Caco-2 (cell line): ENCODE measurements at regions of chr3 and their contacts with region 1.

Region 1: GRCh38 chr3:57755668-57756527 is at the start of gene SLMAP:
- DNase-seq: peak; percentile 96 to 98
- H3K4me3 ChIP-seq: peak within 1 kb of the TSS; percentile 99
- H3K4me3 Mint-ChIP-seq: peak within 1 kb of the TSS; percentile 95
- H3K27ac Mint-ChIP-seq: peak within 1 kb of the TSS; percentile 95
- H3K4me1 ChIP-seq: peaks cover 20% of the 10 kb centered on the region
- H3K4me1 Mint-ChIP-seq: peaks cover 12% of the 10 kb centered on the region
- H3K27me3 ChIP-seq: no peaks in the 10 kb centered on the region
- H3K27me3 Mint-ChIP-seq: no peaks in the 10 kb centered on the region
- CTCF ChIP-seq: no peak
- total RNA-seq, gene SLMAP: 126 and 136 TPM in 2 replicates

Region 2: DNA sequence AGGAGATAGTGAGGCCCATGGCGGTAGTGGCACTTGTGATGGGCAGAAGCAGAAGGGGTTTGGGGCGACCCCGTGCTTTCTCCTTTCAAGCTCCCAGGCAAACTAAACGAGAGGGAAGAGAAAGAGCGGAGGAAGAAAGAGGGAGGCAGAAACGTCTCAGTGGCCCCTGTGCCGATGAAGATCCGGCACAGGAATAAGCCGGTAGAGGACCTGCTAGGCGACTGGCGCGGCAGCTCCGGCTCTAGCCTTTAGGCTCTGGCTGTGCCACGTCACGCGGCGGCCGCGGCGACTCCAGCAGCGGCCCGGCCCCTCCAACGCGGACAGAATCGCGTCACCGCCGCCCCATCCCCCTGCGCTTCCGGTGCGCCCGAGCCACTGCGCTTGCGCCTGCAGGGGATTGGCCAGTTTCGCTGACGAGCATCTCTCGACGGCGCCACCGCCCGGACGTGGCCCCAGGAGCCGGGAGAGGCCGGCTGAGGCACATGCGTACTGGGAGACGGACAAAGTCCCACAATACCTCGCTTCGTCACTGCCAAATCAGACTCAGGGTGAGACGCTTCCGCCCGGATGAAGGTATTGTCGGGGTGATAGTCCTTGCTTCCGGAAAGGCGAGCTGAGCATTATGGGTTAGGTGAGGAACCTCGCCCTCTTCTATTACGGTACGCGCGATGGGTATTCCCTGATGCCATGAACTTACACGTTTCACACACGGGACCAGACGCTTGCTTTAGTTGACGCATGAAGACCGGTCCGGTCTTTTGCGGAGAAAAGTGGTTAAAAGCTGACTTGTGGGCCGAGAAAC is 158.6 kb before region 1 on chr3 and contains the start of gene ARF4:
- CTCF ChIA-PET with region 1: no interaction called
- POLR2A ChIA-PET with region 1: interaction called, 5 read pairs
- intact Hi-C with region 1: loop called (anchors 1 kb)
- DNase-seq: peak; percentile 99
- H3K4me3 ChIP-seq: peak within 1 kb of the TSS; percentile 90
- H3K4me3 Mint-ChIP-seq: peak within 1 kb of the TSS; percentile 84
- H3K27ac Mint-ChIP-seq: peak within 1 kb of the TSS; percentile 93
- H3K4me1 ChIP-seq: peaks cover 21% of the 10 kb centered on the region
- H3K4me1 Mint-ChIP-seq: peaks cover 22% of the 10 kb centered on the region
- H3K27me3 ChIP-seq: no peaks in the 10 kb centered on the region
- H3K27me3 Mint-ChIP-seq: no peaks in the 10 kb centered on the region
- CTCF ChIP-seq: peak in 1 of 2 experiments; percentile 16
- total RNA-seq, gene ARF4: 194 and 204 TPM in 2 replicates

Region 3: GRCh38 chr3:57692259-57693147 is 63.4 kb before region 1 on chr3 and contains the start of gene DENND6A:
- CTCF ChIA-PET with region 1: no interaction called
- POLR2A ChIA-PET with region 1: interaction called, 17 read pairs
- intact Hi-C with region 1: loop called (anchors 1 kb)
- DNase-seq: peak; percentile 96
- H3K4me3 ChIP-seq: peak within 1 kb of the TSS; percentile 60
- H3K4me3 Mint-ChIP-seq: peak within 1 kb of the TSS; percentile 82
- H3K27ac Mint-ChIP-seq: peak within 1 kb of the TSS; percentile 77
- H3K4me1 ChIP-seq: peaks cover 13% of the 10 kb centered on the region; the same call in 1 of the 2 replicates
- H3K4me1 Mint-ChIP-seq: peaks cover 6% of the 10 kb centered on the region
- H3K27me3 ChIP-seq: no peaks in the 10 kb centered on the region
- H3K27me3 Mint-ChIP-seq: no peaks in the 10 kb centered on the region
- CTCF ChIP-seq: no peak
- total RNA-seq, gene DENND6A: 20.6 and 21.8 TPM in 2 replicates

Region 4: DNA sequence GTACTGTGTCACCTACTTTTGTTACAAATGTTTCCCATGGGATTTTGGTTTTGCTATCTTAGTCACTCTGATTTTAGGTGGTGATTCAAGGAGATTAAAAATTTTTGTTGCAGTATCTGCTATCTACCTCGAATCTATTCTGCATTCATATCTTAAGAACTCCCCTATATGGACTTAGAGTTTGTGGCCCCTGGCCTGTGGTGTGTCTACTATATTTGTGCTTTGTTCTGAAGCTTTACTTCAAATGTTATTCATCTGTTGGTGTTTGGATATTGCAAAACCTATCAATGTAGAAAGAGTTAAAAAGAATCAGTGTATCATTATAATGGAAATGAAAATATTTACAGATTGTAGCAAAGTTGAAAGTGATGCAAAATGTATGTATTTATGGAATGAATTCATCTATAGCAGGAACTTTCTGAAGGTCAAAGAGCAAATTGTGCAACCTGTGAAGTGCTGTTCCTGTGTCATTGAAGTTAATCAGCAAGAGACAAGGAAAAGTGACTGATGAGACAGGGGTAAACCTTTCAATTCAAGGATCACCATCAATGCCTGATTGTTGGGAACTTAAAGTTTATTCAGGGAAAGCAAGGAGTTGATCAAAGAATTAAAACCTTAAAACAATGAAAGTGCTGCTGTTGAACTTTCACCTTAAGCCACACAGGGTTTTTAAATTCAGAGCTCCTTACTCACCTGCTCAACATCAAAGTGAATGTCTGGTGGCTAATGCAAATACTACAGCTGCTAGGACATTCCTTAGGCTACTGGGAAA is 71.2 kb after region 1 on chr3:
- CTCF ChIA-PET with region 1: no interaction called
- POLR2A ChIA-PET with region 1: interaction called, 4 read pairs
- intact Hi-C with region 1: loop called (anchors 1 kb)
- DNase-seq: peak; percentile 65 to 77
- H3K4me3 ChIP-seq: no peak overlapping the region
- H3K4me3 Mint-ChIP-seq: peak overlapping the region; percentile 7
- H3K27ac Mint-ChIP-seq: peak overlapping the region; percentile 93
- H3K4me1 ChIP-seq: peaks cover 63% of the 10 kb centered on the region
- H3K4me1 Mint-ChIP-seq: peaks cover 48% of the 10 kb centered on the region
- H3K27me3 ChIP-seq: no peaks in the 10 kb centered on the region
- H3K27me3 Mint-ChIP-seq: no peaks in the 10 kb centered on the region
- CTCF ChIP-seq: no peak

Region 5: GRCh38 chr3:57852896-57853295 is 97.0 kb after region 1 on chr3:
- CTCF ChIA-PET with region 1: interaction called, 3 read pairs
- POLR2A ChIA-PET with region 1: no interaction called
- intact Hi-C with region 1: loop called (anchors 5 kb)
- DNase-seq: no peak
- H3K4me3 ChIP-seq: no peak overlapping the region
- H3K4me3 Mint-ChIP-seq: no peak overlapping the region
- H3K27ac Mint-ChIP-seq: no peak overlapping the region
- H3K4me1 ChIP-seq: peaks cover 14% of the 10 kb centered on the region
- H3K4me1 Mint-ChIP-seq: peaks cover 20% of the 10 kb centered on the region
- H3K27me3 ChIP-seq: no peaks in the 10 kb centered on the region
- H3K27me3 Mint-ChIP-seq: no peaks in the 10 kb centered on the region
- CTCF ChIP-seq: peak in 1 of 2 experiments; percentile 3